ENCODE measurements at regions of chr3 and their contacts with region 1.

Region 1: GRCh38 chr3:58491506-58492402 is at the start of gene KCTD6:
- DNase-seq: peak; percentile 94
- H3K4me3 ChIP-seq: peak within 1 kb of the TSS; percentile 75
- H3K27ac ChIP-seq: peak within 1 kb of the TSS; percentile 55
- H3K4me1 ChIP-seq: peaks cover 7% of the 10 kb centered on the region
- H3K27me3 ChIP-seq: no peaks in the 10 kb centered on the region
- CTCF ChIP-seq: peak; percentile 28
- total RNA-seq, gene KCTD6: 8.1 to 10.2 TPM

Region 2: GRCh38 chr3:57078344-57078634 is 1413.5 kb before region 1 on chr3:
- intact Hi-C with region 1: no loop called
- DNase-seq: peak; percentile 69
- H3K4me3 ChIP-seq: peak overlapping the region; percentile 55
- H3K27ac ChIP-seq: peak overlapping the region; percentile 45
- H3K4me1 ChIP-seq: no peaks in the 10 kb centered on the region
- H3K27me3 ChIP-seq: no peaks in the 10 kb centered on the region
- CTCF ChIP-seq: no peak

Region 3: GRCh38 chr3:58433400-58434169 is 58.2 kb before region 1 on chr3 and contains the start of gene PDHB:
- intact Hi-C with region 1: loop called (anchors 5 kb)
- DNase-seq: peak; percentile 89
- H3K4me3 ChIP-seq: peak within 1 kb of the TSS; percentile 82
- H3K27ac ChIP-seq: peak within 1 kb of the TSS; percentile 85
- H3K4me1 ChIP-seq: peaks cover 4% of the 10 kb centered on the region
- H3K27me3 ChIP-seq: no peaks in the 10 kb centered on the region
- CTCF ChIP-seq: no peak
- total RNA-seq, gene PDHB: 66.9 to 87.4 TPM